Transverse colon (tissue), 4 donors: ENCODE measurements at regions of chr14 and their contacts with region 1.

Region 1: DNA sequence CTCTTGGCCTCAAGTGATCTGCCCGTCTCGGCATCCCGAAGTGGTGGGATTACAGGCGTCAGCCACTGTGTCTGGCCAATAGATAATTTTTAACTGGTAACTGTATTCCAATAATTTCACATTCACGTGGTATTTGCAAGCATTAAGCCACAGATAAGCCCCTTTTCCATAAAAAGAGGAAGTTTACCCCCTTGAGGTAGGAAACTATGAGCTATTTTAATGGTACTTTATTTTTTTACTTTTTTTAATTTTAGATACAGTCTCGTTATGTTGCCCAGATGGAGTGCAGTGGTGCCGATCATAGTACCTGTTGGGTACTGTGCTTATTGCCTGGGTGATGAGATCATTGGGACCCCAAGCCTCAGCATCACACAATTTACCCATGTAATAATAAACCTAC is 42.9 kb upstream of the AP4S1 start:
- DNase-seq: no peak
- H3K4me3 ChIP-seq: no peak overlapping the region
- H3K27ac ChIP-seq: no peak overlapping the region
- H3K4me1 ChIP-seq: peaks cover 8 to 28% (median 13%) of the 10 kb centered on the region in 4 donors
- H3K27me3 ChIP-seq: no peaks in the 10 kb centered on the region
- CTCF ChIP-seq: no peak
- EP300 ChIP-seq: no peak
- POLR2A ChIP-seq: no peak

Region 2: GRCh38 chr14:30838351-30838750 is 144.2 kb before region 1 on chr14:
- in situ Hi-C with region 1: no loop called
- intact Hi-C with region 1: no loop called
- DNase-seq: no peak
- H3K4me3 ChIP-seq: no peak overlapping the region
- H3K27ac ChIP-seq: no peak overlapping the region
- H3K4me1 ChIP-seq: peaks cover 0 to 20% (median 6%) of the 10 kb centered on the region in 4 donors
- H3K27me3 ChIP-seq: no peaks in the 10 kb centered on the region
- CTCF ChIP-seq: no peak
- EP300 ChIP-seq: no peak
- POLR2A ChIP-seq: no peak

Region 3: DNA sequence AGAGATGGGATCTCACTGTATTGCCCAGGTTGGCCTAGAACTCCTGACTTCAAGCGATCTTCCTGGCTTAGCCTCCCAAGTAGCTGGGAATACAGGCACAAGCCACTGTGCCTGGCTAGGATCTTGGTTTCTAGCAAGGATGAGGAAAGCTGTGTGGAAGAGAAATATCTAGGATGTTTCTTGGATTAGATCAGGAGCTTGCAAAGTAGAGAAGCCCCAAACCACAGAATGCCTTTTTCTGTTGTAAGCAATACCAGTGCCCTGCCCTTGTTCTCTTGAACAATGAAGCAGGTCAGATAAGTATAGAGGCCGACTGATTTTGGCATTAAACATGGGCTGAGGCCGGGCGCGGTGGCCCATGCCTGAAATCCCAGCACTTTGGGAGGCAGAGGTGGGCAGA is 87.9 kb after region 1 on chr14:
- in situ Hi-C with region 1: loop called in 2 of 4 experiments (anchors 5 to 25 kb)
- intact Hi-C with region 1: no loop called
- DNase-seq: no peak
- H3K4me3 ChIP-seq: no peak overlapping the region
- H3K27ac ChIP-seq: no peak overlapping the region
- H3K4me1 ChIP-seq: no peaks in the 10 kb centered on the region
- H3K27me3 ChIP-seq: no peaks in the 10 kb centered on the region
- CTCF ChIP-seq: no peak
- EP300 ChIP-seq: no peak
- POLR2A ChIP-seq: no peak